Body of pancreas (tissue), 4 donors: ENCODE measurements at regions of chr17 and their contacts with region 1.

Region 1: GRCh38 chr17:55527540-55528118 is 16.4 kb upstream of the SMIM36 start:
- DNase-seq: peak in 2 of 4 donors; percentile 8 to 23
- ATAC-seq: no peak
- H3K4me3 ChIP-seq: no peak overlapping the region
- H3K27ac ChIP-seq: no peak overlapping the region
- H3K4me1 ChIP-seq: no peaks in the 10 kb centered on the region
- H3K27me3 ChIP-seq: no peaks in the 10 kb centered on the region
- CTCF ChIP-seq: peak in 3 of 7 experiments; percentile 19 to 35 (median 29)
- POLR2A ChIP-seq: no peak

Region 2: DNA sequence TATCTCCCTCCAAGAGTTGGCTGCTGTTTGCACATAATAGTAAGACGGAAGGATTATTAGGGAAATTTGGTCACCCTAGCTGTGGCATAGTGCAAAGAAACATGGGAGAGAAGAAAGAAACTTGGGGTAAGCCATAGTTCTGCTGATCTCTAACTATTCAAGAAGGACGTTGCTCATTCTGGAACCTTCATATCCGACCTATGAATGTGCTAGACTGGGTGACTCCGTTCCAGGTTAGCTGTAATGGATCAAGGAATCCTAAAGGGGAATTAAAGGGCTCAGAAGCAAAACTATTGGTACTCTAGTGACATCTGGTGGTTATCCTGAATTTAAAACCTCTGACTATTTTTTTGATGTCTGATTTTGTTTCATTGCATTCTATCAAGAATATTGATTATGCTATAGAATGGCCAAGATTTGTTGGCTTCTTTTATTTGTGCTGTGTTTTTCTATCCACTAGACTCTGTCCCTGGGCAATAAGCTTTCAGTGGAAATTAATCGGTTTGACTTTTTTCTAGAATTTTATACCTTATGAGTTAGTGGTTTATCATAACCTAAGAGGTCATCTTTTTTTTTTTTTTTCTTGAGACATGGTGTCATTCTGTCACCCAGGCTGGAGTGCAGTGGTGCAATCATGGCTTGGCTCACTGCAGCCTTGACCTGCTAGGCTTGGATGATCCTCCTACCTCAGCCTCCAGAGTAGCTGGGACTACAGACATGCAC is 242.7 kb after region 1 on chr17:
- intact Hi-C with region 1: loop called (anchors 5 kb)
- DNase-seq: no peak
- ATAC-seq: peak; percentile 38
- H3K4me3 ChIP-seq: no peak overlapping the region
- H3K27ac ChIP-seq: no peak overlapping the region
- H3K4me1 ChIP-seq: no peaks in the 10 kb centered on the region
- H3K27me3 ChIP-seq: no peaks in the 10 kb centered on the region
- CTCF ChIP-seq: peak; percentile 30 to 68 (median 64)
- POLR2A ChIP-seq: no peak